H1 (cell line): ENCODE measurements at regions of chr1 and their contacts with region 1.

Region 1: DNA sequence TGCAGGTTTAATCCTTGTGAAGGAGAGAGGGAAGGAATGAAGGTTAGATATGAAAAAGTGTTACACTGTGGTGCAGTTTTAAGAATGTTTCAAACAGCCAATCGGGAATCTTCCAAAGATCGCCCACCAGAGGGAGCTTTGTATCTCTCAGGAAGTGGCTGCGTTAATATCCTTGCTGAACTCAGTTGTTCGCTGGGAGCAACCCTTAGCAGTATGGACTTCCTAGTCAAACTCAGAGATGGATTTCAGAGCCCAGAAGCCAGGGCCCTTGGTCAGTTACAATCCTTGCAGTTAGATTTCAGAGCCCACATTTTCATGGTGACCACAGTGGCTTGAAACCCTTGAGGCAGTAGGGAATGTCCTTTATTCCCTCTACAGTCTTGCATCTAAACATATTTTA is 136.2 kb downstream of the NTNG1 start:
- DNase-seq: peak; percentile 21 to 54
- H3K4me3 ChIP-seq: no peak overlapping the region
- H3K27ac ChIP-seq: no peak overlapping the region
- H3K4me1 ChIP-seq: no peaks in the 10 kb centered on the region; a peak in 1 of 7 replicates
- H3K27me3 ChIP-seq: no peaks in the 10 kb centered on the region
- CTCF ChIP-seq: peak in 2 of 3 experiments; percentile 64 to 77; a peak in 3 of 4 replicates
- EP300 ChIP-seq: no peak
- POLR2A ChIP-seq: no peak
- RAD21 ChIP-seq: peak; percentile 76 to 81

Region 2: DNA sequence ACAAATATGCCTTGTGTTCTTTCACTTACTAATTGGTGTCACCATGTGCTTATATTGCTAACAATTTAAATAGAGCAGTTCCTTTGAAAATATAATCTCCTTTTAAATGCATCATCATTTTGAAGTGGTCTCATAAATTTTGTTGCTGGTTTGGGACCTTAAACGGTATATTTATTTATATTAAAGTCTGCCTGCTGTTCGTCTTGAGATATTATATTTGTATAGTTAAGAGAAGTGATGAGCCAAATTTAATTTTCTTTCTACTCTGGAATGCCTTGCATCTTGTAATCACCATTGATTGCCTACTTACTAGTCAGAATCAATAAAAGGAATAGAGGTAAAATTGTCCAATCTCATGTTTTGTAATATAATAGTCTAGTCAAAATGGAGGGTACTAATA is 44.6 kb before region 1 on chr1:
- CTCF ChIA-PET with region 1: no interaction called
- POLR2A ChIA-PET with region 1: no interaction called
- DNase-seq: no peak
- H3K4me3 ChIP-seq: no peak overlapping the region
- H3K27ac ChIP-seq: no peak overlapping the region
- H3K4me1 ChIP-seq: peaks cover 0 to 1% (median under 1%) of the 10 kb centered on the region in 4 experiments; a peak in 1 of 7 replicates
- H3K27me3 ChIP-seq: no peaks in the 10 kb centered on the region
- CTCF ChIP-seq: no peak
- EP300 ChIP-seq: no peak
- POLR2A ChIP-seq: no peak
- RAD21 ChIP-seq: no peak

Region 3: GRCh38 chr1:107244709-107245500 is 32.1 kb before region 1 on chr1:
- CTCF ChIA-PET with region 1: interaction called, 10 read pairs
- POLR2A ChIA-PET with region 1: no interaction called
- DNase-seq: no peak
- H3K4me3 ChIP-seq: no peak overlapping the region
- H3K27ac ChIP-seq: no peak overlapping the region
- H3K4me1 ChIP-seq: peaks cover 0 to 5% (median 1%) of the 10 kb centered on the region in 4 experiments; a peak in 2 of 7 replicates
- H3K27me3 ChIP-seq: no peaks in the 10 kb centered on the region
- CTCF ChIP-seq: no peak
- EP300 ChIP-seq: no peak
- POLR2A ChIP-seq: no peak
- RAD21 ChIP-seq: no peak

Region 4: GRCh38 chr1:107294686-107295085 is 17.7 kb after region 1 on chr1:
- CTCF ChIA-PET with region 1: interaction called, 14 read pairs
- POLR2A ChIA-PET with region 1: no interaction called
- DNase-seq: no peak
- H3K4me3 ChIP-seq: no peak overlapping the region
- H3K27ac ChIP-seq: no peak overlapping the region
- H3K4me1 ChIP-seq: no peaks in the 10 kb centered on the region
- H3K27me3 ChIP-seq: no peaks in the 10 kb centered on the region; a peak in 1 of 7 replicates
- CTCF ChIP-seq: no peak
- EP300 ChIP-seq: no peak
- POLR2A ChIP-seq: no peak
- RAD21 ChIP-seq: no peak

Region 5: DNA sequence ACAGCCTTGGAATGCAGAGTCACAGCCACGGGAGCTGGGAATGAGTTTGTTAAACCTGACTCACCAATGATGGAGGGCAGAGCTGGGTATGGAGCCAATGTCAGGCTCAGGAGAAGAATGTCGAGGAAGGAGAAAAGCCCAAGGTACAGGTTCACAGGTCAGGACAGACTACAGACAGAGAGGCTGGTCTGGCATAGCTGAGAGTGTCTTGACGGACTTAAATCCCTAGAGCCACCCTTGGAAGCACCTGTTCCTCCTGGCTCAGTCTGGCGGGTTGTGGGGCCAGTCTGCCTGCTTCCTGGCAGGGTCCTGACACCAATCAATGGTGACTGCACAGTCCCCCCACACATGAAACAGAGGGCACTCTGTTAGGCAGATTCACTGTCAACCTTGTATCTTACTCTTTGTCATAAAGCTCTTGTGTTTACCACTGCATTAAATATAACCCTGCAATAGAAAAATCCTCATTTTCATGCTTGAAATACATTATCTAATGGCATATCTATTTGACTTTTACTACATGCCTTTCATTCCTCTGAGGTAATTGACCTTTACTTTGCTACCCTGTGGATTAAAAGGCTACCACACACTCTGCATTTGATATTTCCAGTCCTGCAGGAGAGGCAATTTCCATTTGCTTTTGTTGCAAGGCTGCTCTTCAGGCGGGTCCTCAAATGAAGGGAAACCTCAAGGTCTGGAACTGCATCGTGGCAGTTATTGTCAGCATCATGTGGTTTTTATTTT is 101.7 kb after region 1 on chr1:
- CTCF ChIA-PET with region 1: no interaction called
- POLR2A ChIA-PET with region 1: no interaction called
- DNase-seq: no peak
- H3K4me3 ChIP-seq: no peak overlapping the region
- H3K27ac ChIP-seq: no peak overlapping the region
- H3K4me1 ChIP-seq: no peaks in the 10 kb centered on the region
- H3K27me3 ChIP-seq: no peaks in the 10 kb centered on the region
- CTCF ChIP-seq: no peak
- EP300 ChIP-seq: no peak
- POLR2A ChIP-seq: no peak
- RAD21 ChIP-seq: no peak